ENCODE measurements at regions of chr17 and their contacts with region 1.

Region 1: GRCh38 chr17:79915850-79916430 is 76.7 kb upstream of the CBX4 start:
- DNase-seq: peak in 2 of 10 donors; percentile 31 to 53
- H3K4me3 ChIP-seq: no peak overlapping the region
- H3K27ac ChIP-seq: no peak overlapping the region
- H3K27me3 ChIP-seq: peaks cover 0 to 17% (median 0%) of the 10 kb centered on the region in 45 donors
- CTCF ChIP-seq: peak in 47 of 56 donors; percentile 7 to 65 (median 45)

Region 2: DNA sequence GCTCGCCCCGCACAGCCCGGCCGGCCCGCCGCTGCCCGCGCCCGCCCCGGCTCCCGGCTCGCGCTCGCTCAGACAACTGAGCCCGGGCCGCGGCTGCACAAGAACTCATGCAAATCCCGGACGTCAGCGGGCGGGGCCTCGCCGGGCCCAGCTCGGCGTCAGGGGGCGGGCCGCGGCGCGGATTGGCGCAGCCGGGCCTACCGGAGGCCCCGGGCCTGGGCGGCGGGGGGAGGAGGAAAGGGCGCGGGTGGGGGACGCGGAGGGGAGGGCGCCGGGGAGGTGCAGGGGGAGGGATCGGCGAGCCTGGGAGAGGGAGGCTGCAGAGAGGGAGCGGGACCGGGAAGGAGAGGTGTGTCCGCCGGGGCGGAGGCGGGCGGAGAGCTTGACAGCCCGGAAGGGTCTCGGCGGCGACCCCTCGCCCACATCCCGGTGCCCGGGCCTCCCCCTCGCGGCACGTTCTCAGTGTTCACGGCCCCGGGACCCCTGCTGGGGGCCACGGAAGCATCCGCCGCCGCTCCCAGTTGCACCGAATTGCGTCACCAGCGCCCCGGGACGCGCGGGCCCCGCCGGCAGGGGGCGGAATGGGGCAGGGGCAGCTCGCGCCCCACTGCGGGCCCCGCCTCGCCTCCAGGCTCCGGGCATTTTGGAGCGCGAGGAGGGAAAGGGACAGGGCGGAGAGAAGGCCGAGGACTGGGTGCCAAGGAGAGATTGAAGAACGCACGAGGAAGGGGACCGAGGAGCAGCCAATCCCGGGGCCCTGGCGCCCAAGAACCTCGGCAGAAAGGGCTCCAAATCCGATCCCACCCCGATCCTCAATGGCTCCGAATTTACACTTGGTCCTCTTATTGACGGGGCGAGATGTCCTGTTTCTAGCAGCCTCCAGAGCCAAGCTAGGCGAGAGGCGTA is 76.3 kb before region 1 on chr17 and contains the start of gene CBX4:
- intact Hi-C with region 1: loop called (anchors 2 to 5 kb)
- DNase-seq: peak; percentile 94 to 98 (median 96)
- H3K4me3 ChIP-seq: peak within 1 kb of the TSS; percentile 57 to 98 (median 84)
- H3K27ac ChIP-seq: peak within 1 kb of the TSS; percentile 86 to 99 (median 98)
- H3K27me3 ChIP-seq: peaks cover 14 to 51% (median 42%) of the 10 kb centered on the region in 45 donors
- CTCF ChIP-seq: peak in 55 of 56 donors; percentile 10 to 68 (median 51)
- total RNA-seq, gene CBX4: 26.4 to 54.9 (median 35.9) TPM

Region 3: DNA sequence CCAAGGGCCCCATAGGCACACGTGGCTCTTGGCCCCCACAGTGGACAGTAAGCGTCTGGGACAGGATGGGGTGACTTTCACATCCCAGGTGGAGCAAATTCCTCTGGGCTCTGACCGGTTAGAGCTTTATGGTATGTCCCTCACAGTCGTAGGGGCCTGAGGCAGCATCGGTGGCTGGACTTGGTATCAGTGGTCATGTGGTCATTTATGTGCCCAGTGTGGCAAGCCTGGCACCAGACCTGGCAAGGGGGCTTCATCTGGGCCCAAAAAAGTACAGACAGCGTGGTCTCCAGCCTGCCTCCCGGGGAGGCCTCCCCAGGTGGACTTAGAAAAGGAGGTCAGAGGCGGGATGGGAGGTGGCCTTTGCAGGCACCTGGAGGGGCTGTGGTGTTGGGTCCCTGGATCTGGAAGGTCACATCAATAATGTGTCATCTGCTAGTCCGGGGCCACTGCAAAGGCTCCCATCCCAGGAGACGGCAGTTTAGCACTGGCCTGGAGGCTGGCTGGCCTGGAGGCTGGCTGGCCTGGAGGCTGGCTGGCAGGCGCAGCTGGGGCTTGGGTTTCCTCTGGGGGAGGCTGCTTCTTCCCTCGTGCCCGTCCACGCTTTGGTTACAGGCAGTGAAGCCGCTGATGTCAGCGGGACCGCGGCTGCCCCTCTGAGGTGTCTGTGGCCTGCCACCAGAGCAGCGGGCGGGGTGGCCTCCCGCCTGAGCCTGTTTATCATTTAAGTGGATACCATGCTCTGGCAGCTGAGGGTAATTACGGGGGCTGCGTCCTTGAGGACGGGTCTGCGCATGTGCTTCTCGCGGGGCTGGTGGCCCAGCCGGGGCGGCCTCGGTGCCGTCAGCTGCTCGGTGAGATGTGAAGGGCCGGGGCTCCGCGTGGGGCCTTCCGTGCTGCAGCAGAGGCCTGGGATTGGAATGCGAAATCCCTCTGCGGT is 56.0 kb before region 1 on chr17:
- intact Hi-C with region 1: loop called in 1 of 2 experiments (anchors 5 kb)
- DNase-seq: no peak
- H3K4me3 ChIP-seq: no peak overlapping the region
- H3K27ac ChIP-seq: no peak overlapping the region
- H3K27me3 ChIP-seq: peaks cover 0 to 5% (median 0%) of the 10 kb centered on the region in 45 donors
- CTCF ChIP-seq: no peak

Region 4: DNA sequence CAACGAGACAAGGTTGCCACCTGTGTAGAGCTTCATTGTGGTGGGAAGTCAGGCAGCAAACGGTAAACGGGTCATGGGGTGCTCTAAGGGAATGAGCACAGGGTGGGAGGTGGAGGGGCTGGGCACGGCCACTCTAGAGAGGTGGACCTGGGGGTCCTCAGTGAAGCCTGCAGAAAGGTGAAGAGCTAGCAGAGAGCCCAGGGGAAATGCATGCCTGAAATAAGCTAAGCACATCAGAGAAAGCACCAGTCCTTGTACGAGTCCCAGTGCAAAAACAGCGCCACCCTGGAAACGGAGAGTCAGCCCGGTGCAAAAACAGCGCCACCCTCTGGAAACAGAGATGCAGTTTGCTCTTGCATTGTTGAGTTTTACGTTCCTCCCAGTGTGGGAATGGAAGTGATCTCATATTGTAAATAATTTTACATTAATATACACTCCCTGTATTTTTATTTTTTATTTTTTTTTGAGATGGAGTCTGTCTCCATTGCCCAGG is 54.7 kb after region 1 on chr17:
- intact Hi-C with region 1: loop called in 1 of 2 experiments (anchors 5 kb)
- DNase-seq: peak in 7 of 10 donors; percentile 22 to 74 (median 44)
- H3K4me3 ChIP-seq: no peak overlapping the region
- H3K27ac ChIP-seq: peak overlapping the region in 1 of 59 donors; percentile 13
- H3K27me3 ChIP-seq: no peaks in the 10 kb centered on the region
- CTCF ChIP-seq: peak in 55 of 56 donors; percentile 21 to 91 (median 61)

Measured in dorsolateral prefrontal cortex (tissue), 120 donors.